Heart left ventricle (tissue), 16 donors: ENCODE measurements at regions of chr1 and their contacts with region 1.

Region 1: GRCh38 chr1:206905280-206906164 is 8.3 kb downstream of the IL24 start:
- DNase-seq: no peak
- ATAC-seq: no peak
- H3K4me3 ChIP-seq: no peak overlapping the region
- H3K27ac ChIP-seq: peak overlapping the region in 1 of 12 donors; percentile 24
- H3K4me1 ChIP-seq: peaks cover 0 to 26% (median 10%) of the 10 kb centered on the region in 12 donors
- H3K27me3 ChIP-seq: peaks cover 0 to 28% (median 10%) of the 10 kb centered on the region in 9 donors
- CTCF ChIP-seq: no peak
- POLR2A ChIP-seq: no peak

Region 2: GRCh38 chr1:206865013-206865671 is 40.4 kb before region 1 on chr1 and contains the start of gene IL20:
- intact Hi-C with region 1: loop called in 5 of 10 experiments (anchors 2 to 5 kb)
- DNase-seq: peak; percentile 64 to 84 (median 78)
- ATAC-seq: peak; percentile 69 to 86 (median 80)
- H3K4me3 ChIP-seq: no peak within 1 kb of the TSS
- H3K27ac ChIP-seq: no peak within 1 kb of the TSS
- H3K4me1 ChIP-seq: peaks cover 0 to 4% (median 0%) of the 10 kb centered on the region in 12 donors
- H3K27me3 ChIP-seq: peaks cover 0 to 18% (median 0%) of the 10 kb centered on the region in 9 donors
- CTCF ChIP-seq: peak; percentile 58 to 79 (median 65)
- POLR2A ChIP-seq: no peak
- total RNA-seq, gene IL20: not detected

Region 3: GRCh38 chr1:207134581-207134980 is 229.1 kb after region 1 on chr1:
- intact Hi-C with region 1: no loop called
- DNase-seq: no peak
- ATAC-seq: no peak
- H3K4me3 ChIP-seq: no peak overlapping the region
- H3K27ac ChIP-seq: peak overlapping the region in 1 of 12 donors; percentile 40
- H3K4me1 ChIP-seq: peaks cover 0 to 12% (median 0%) of the 10 kb centered on the region in 12 donors
- H3K27me3 ChIP-seq: no peaks in the 10 kb centered on the region
- CTCF ChIP-seq: no peak
- POLR2A ChIP-seq: no peak